Common myeloid progenitor, CD34-positive (primary cell): ENCODE measurements at regions of chr11 and their contacts with region 1.

Region 1: DNA sequence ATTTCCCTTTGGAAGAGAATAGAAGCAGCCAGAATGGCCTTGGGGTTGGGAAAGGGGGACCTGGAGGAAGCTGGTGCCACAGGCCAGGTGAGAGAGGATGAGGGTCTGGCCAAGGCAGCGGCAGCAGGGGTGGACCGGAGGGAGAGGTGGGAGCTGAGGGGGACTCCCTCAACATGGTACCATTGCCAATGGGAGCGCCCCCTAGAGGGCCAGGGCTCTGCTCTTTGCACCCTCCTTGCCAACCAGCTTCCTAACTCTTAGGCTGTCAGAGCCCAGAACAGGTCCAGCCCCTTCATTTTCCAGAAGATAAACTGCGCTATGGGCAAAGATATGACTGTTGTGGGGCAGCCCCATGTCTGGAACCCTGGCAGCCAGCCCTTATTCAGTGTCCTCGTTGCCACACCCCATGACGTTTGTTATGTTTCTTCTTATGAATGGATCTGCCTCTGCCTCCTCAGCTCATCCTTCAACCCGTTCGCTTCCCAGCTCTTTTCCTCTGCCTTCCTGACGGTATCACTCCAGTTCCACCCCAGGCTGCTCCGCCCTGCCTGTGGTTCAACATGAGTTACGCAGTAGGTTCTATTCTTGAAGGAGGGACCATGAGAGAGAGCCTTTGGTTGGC is 185.2 kb downstream of the GRIK4 start:
- DNase-seq: no peak
- H3K4me3 ChIP-seq: no peak overlapping the region
- H3K27ac ChIP-seq: no peak overlapping the region
- H3K4me1 ChIP-seq: no peaks in the 10 kb centered on the region
- H3K27me3 ChIP-seq: peaks cover 0 to 15% (median 0%) of the 10 kb centered on the region in 5 experiments

Region 2: GRCh38 chr11:120682866-120683265 is 13.8 kb before region 1 on chr11:
- CTCF ChIA-PET with region 1: interaction called, 38 read pairs
- POLR2A ChIA-PET with region 1: no interaction called
- DNase-seq: no peak
- H3K4me3 ChIP-seq: no peak overlapping the region
- H3K27ac ChIP-seq: no peak overlapping the region
- H3K4me1 ChIP-seq: no peaks in the 10 kb centered on the region
- H3K27me3 ChIP-seq: peaks cover 0 to 45% (median 11%) of the 10 kb centered on the region in 5 experiments

Region 3: GRCh38 chr11:120738516-120739046 is 41.9 kb after region 1 on chr11:
- CTCF ChIA-PET with region 1: no interaction called
- POLR2A ChIA-PET with region 1: no interaction called
- DNase-seq: no peak
- H3K4me3 ChIP-seq: no peak overlapping the region
- H3K27ac ChIP-seq: no peak overlapping the region
- H3K4me1 ChIP-seq: no peaks in the 10 kb centered on the region
- H3K27me3 ChIP-seq: no peaks in the 10 kb centered on the region

Region 4: GRCh38 chr11:120766318-120766717 is 69.6 kb after region 1 on chr11:
- CTCF ChIA-PET with region 1: no interaction called
- POLR2A ChIA-PET with region 1: no interaction called
- DNase-seq: no peak
- H3K4me3 ChIP-seq: no peak overlapping the region
- H3K27ac ChIP-seq: no peak overlapping the region
- H3K4me1 ChIP-seq: no peaks in the 10 kb centered on the region
- H3K27me3 ChIP-seq: peaks cover 0 to 7% (median 0%) of the 10 kb centered on the region in 5 experiments